ENCODE measurements at regions of chr16 and their contacts with region 1.

Region 1: DNA sequence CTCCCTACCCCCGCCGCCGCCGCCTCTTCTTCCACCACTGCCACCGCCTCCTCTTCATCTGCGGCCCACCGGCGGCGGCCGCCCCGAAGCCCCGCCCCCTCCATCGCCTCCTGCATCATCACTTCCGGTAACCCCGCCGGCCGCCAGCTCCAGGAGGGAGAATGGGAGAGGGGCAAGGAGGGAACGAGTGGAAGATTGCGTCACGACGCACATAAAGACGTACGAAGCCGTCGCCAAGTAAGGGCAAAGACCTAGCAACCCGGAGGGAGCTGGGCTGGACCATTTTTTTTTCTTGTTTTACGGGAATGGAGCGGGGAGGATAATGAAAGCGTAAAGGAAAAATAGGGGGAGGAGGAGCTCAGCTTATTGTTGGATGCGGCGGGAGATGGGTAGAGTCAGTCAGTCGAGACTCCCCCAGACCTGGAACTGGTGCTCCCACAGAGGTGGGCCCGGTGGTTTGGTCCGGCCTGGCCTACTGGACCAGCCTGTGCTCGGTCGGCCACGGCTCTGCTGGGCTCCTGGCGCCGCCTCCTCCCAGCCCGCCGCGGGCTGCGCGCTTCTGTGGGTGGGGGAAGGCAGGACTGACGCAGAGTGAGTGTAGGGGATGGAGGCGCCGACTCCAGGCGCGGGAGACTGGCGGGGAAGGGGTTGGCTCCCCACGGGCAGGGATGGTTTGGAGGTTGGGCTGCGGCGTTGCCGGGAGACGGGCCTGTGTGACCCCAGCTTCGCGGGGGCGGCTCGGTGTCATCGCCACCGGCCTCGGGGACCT is at the starts of genes DCUN1D3 and LYRM1:
- DNase-seq: peak; percentile 100
- ATAC-seq: peak; percentile 87
- H3K4me3 ChIP-seq: peak within 1 kb of the TSS; percentile 100
- H3K27ac ChIP-seq: peak within 1 kb of the TSS; percentile 100
- H3K4me1 ChIP-seq: peaks cover 10% of the 10 kb centered on the region
- H3K27me3 ChIP-seq: no peaks in the 10 kb centered on the region
- CTCF ChIP-seq: no peak
- POLR2A ChIP-seq: peak; percentile 96
- RAD21 ChIP-seq: no peak
- total RNA-seq, gene DCUN1D3: 42.3 and 51.7 TPM in 2 replicates
- total RNA-seq, gene LYRM1: 35.0 and 43.6 TPM in 2 replicates

Region 2: DNA sequence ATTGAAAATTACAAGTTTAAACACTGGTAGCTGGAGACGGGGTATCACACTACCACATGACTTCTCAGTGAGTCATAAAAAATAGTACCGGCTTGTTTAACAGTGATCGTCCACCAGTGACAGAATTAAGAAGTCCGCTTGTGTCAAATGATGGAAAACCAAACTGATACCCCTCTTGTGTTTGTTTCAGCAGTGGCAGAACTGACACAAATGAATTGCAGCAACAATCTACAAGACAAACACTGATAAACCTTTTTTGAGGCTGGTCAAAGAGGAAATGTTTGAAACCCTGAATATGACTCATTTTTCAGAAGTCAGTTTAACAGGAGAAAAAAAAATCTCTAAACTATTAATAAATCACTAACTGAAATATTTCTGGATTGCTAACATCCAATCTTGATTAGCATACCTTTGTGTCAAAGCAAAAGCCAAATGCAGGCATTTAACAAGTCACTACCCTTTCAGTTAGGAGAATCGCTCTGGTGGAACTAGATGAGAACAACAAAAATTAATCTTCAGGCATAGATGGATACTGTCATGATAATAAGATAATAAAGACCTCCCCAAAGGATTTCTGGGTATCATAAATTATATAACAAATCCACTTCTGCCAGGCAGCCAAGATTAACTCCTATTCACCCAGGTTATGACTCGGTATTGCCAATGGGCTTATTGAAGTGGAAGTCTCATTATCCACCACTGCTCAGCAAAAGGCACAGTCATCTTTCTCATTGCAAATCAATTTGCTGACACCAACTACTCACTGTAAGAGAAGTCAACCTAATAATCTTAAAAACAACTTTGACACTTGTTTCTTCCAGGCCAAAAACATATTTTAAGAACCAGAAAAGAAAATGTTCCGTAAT is 21.1 kb before region 1 on chr16:
- CTCF ChIA-PET with region 1: no interaction called
- POLR2A ChIA-PET with region 1: no interaction called
- dilution Hi-C with region 1: no loop called
- in situ Hi-C with region 1: no loop called
- intact Hi-C with region 1: no loop called
- DNase-seq: peak; percentile 74
- ATAC-seq: peak; percentile 79
- H3K4me3 ChIP-seq: no peak overlapping the region
- H3K27ac ChIP-seq: 0 out of 2 replicates have a peak overlapping the region, but pooled peaks have one; percentile 37
- H3K4me1 ChIP-seq: peaks cover 17% of the 10 kb centered on the region
- H3K27me3 ChIP-seq: no peaks in the 10 kb centered on the region
- CTCF ChIP-seq: no peak
- POLR2A ChIP-seq: no peak
- RAD21 ChIP-seq: no peak

Region 3: DNA sequence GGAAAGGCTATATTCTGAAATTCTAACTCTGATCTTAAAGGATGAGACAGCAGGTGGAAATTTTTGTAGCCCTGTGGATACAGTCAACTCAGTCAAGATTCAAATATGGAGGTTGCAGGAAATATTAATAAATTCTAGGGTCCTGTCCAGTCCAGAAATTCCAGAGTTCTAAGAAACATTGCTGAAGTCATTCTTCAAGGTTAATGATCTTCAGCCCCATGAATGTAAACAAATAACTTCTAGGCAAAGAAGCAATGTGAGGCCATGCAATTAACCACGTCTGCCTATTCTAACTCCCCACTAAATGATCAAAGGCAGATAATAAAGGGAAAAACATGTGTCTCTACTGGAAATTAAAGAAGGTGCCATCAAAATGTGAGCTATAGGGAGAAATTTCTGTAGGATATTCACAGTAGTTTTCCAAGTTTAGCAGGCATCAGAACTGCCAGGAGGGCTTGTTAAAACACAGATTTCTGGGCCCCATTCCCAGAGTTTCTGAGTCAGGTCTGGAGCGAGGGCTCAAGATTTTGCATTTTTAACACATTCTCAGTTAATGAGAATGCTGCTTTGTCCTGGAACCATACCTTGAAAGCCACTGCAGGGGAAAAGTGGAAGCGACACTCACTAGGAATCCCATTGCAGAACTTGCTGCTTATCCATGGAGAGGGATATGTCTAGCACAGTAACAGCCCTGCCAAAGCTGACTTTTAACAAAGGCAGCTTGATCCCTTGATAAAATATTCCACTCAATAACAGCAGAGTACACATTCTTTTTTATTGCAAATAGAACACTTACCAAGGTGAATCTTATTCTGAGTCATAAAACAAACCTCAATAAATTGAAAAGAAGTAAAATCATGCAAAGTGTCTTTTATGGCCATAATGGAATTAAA is 188.4 kb after region 1 on chr16:
- CTCF ChIA-PET with region 1: no interaction called
- POLR2A ChIA-PET with region 1: no interaction called
- dilution Hi-C with region 1: no loop called
- in situ Hi-C with region 1: no loop called
- intact Hi-C with region 1: loop called (anchors 2 kb)
- DNase-seq: peak; percentile 69
- ATAC-seq: peak; percentile 76
- H3K4me3 ChIP-seq: no peak overlapping the region
- H3K27ac ChIP-seq: peak overlapping the region; percentile 17; the same call in 1 of the 2 replicates
- H3K4me1 ChIP-seq: no peaks in the 10 kb centered on the region
- H3K27me3 ChIP-seq: no peaks in the 10 kb centered on the region
- CTCF ChIP-seq: no peak
- POLR2A ChIP-seq: no peak
- RAD21 ChIP-seq: no peak

Region 4: GRCh38 chr16:21101631-21102420 is 201.3 kb after region 1 on chr16:
- CTCF ChIA-PET with region 1: no interaction called
- POLR2A ChIA-PET with region 1: no interaction called
- dilution Hi-C with region 1: no loop called
- in situ Hi-C with region 1: no loop called
- intact Hi-C with region 1: loop called (anchors 1 kb)
- DNase-seq: peak; percentile 20
- ATAC-seq: peak; percentile 59
- H3K4me3 ChIP-seq: no peak overlapping the region
- H3K27ac ChIP-seq: no peak overlapping the region
- H3K4me1 ChIP-seq: peaks cover 5% of the 10 kb centered on the region; the same call in 1 of the 2 replicates
- H3K27me3 ChIP-seq: no peaks in the 10 kb centered on the region
- CTCF ChIP-seq: peak; percentile 45
- POLR2A ChIP-seq: no peak
- RAD21 ChIP-seq: peak; percentile 43

Measured in IMR-90 (cell line).